BJ (cell line): ENCODE measurements at regions of chr2 and their contacts with region 1.

Region 1: DNA sequence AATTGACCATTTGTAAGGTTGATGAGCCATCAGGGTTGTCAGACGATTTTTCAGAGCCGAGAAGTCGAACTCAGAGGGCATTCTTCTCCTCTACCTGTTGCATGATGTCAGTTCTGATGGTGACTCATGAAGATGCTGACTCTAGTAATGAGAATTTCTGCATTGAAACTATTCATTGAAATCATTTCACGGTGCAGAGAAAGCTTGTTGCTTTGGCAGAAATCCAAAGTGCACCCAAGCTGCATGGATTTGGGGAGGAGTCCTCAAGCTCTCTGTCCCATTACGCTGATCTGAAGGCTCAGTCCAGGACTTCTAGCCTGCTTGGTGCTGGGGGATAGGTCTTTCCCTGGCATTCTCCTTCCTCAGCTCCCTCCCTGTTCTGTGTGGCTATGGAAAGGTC is 125.7 kb upstream of the PXDN start:
- DNase-seq: no peak
- H3K4me3 ChIP-seq: no peak overlapping the region
- H3K27me3 ChIP-seq: peaks cover 2% of the 10 kb centered on the region
- CTCF ChIP-seq: no peak

Region 2: GRCh38 chr2:1854729-1855547 is 15.0 kb before region 1 on chr2:
- CTCF ChIA-PET with region 1: no interaction called
- POLR2A ChIA-PET with region 1: no interaction called
- DNase-seq: no peak
- H3K4me3 ChIP-seq: no peak overlapping the region
- H3K27me3 ChIP-seq: peaks cover 3% of the 10 kb centered on the region
- CTCF ChIP-seq: peak; percentile 24

Region 3: GRCh38 chr2:1886405-1886992 is 16.5 kb after region 1 on chr2:
- CTCF ChIA-PET with region 1: interaction called, 13 read pairs
- POLR2A ChIA-PET with region 1: no interaction called
- DNase-seq: no peak
- H3K4me3 ChIP-seq: no peak overlapping the region
- H3K27me3 ChIP-seq: no peaks in the 10 kb centered on the region
- CTCF ChIP-seq: peak; percentile 84

Region 4: DNA sequence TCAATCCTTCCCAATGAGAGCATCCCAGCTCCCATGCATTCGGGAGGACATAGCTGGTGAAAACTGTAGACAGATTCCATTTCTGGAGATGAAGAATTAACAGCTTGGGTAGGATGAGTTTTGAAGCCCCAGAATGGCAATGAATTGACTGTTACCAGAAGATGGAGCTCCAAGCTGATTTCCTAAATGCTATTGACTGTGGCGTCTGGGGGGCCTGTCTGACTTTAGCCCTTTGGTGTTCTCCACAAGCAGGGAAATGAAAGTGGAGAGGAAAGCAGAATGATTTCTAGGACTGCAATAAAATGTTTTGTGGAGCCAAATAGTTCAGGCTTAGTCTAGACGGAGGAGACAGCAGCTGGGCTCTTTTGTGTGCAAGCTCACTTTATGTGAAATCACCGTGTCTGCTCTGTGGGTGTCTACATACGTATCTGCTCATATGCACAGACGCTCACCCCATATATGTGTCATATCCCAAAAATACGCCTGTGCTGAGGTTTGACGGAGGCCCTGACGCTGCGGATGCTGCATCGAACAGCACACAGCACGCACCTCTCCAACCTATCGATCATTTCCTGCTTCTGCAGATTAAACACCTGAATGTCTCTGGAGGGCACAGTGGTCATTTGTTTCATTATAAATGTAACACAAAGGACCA is 40.7 kb after region 1 on chr2:
- CTCF ChIA-PET with region 1: no interaction called
- POLR2A ChIA-PET with region 1: no interaction called
- DNase-seq: no peak
- H3K4me3 ChIP-seq: no peak overlapping the region
- H3K27me3 ChIP-seq: no peaks in the 10 kb centered on the region
- CTCF ChIP-seq: 0 out of 2 replicates have a peak, but pooled peaks have one; percentile 22